ENCODE measurements at regions of chr17 and their contacts with region 1.

Region 1: DNA sequence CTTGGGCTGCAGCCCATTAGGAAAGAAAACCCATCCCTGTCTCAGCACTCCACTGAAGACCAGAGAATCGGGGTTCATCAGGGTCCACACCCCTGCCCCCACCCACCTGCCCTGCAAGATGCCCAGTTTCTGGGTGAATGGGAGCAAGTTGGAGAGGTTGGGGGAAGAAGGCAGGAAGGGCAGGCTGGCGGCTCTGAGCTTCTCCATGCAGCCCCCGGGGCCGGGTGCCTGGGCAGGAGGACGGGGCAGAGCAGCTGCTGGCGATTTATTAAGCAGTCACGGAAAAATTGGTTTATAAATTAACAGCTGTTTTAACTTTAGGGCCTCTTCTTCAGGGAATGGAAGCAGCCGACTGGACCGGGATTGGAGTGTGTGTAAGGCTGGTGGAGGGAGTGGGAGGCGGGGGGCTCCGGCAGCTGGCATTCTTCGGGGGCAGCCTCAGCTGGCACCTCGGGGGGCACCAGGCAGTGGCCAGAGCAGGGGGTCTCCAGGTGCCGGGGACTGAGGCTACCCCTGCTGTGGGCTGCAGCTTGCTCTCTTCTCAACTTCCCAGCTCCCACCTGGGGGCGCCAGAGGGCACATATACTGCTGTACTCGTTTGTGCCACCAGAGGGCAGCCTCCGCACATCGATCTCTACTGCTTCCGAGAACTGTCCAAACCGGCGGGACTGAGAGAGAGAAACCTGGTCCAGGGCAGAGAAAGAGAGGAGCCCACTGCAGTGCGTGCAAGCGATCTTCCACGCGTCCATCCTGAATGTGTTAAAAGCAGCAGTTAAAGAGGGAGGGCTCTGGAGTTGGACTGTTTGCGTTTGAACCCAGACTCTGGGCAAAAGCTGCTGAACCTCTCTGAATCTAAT is 5.0 kb upstream of the PPP1R1B start:
- DNase-seq: peak; percentile 92
- ATAC-seq: peak; percentile 79

Region 2: DNA sequence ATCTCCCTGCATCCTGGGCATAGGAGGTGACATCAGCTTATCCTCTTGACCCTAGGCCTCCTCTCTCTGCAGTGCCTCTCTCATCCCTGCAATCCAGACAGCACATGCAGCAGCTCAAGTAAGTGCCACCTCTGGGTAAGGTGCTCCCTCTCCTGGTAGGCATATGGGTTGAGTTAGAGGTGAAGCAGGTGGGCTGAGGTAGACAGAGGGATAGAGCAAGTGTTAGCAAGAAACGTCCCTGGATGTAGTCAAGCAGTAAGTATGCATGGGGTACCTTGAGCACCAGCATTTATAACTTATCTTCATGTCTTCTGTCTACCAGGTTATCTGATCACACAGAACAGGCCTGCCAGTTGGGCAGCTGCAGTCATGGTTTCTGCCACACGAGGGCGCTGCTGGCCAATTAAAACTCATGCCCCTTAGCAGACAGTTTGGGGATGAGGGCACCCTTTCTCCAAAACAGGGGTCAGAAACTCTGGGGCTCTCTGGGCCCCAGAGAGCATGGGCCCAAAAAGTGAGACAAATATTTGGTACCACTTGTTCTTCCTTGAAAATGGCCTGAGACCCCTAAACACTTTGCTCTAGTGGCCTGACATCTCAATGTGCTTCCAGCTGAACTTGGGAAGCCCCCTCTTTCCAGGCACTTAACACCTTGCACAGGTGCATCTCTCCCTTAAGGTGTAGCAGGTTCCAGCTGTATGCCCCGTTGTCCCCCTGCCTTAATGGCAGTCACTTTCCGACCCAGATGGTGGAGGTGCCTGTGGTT is 73.9 kb before region 1 on chr17:
- intact Hi-C with region 1: loop called (anchors 2 kb)
- DNase-seq: peak; percentile 84
- ATAC-seq: peak; percentile 81

Region 3: DNA sequence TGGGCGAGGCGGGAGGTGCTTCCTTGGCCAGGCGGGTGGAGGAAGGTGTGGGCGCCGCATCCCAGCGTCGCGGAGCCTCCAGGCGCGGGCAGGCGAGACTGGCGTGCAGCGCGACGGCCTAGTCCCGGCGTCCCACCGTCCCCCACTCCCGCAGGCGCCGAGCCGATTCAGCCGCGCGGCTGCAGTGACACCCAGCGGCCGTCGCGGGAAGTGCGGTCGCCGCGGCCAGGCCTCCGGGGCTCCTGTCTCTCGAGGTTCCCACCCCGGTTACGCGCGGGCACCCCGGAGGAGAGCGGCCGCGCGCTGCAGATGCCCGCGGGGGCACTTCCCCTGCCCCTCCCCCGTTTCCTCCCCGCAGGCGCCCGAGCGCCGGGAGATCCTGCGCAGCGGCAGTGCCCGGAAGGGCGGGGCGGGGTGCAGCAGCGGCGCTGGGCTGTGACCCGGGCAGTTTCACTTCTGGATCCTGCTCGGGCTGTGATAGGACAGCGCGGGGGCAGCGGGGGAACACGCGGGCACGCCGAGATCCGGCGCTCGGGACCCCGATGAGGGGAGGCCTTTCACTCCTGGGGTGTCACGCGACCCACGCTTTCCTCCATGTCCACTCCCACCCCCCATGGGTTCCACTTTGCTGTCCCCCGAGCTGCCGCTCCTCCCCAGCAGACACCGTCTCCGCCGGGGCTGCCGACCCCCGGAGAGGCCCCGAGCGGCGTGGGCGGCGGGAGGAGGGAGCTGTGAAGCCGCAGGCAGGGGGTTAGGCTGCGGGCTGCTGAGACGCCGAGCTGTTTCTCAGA is 132.6 kb after region 1 on chr17:
- intact Hi-C with region 1: loop called (anchors 5 kb)
- DNase-seq: peak; percentile 96
- ATAC-seq: peak; percentile 95